ENCODE measurements at regions of chr11 and their contacts with region 1.

Region 1: GRCh38 chr11:24598641-24599040 is 101.8 kb downstream of the LUZP2 start:
- DNase-seq: no peak
- H3K4me3 ChIP-seq: no peak overlapping the region
- H3K27ac ChIP-seq: no peak overlapping the region
- H3K4me1 ChIP-seq: no peaks in the 10 kb centered on the region
- H3K27me3 ChIP-seq: no peaks in the 10 kb centered on the region
- CTCF ChIP-seq: no peak
- POLR2A ChIP-seq: no peak

Region 2: GRCh38 chr11:23564370-23564769 is 1034.3 kb before region 1 on chr11:
- intact Hi-C with region 1: no loop called
- DNase-seq: no peak
- H3K4me3 ChIP-seq: no peak overlapping the region
- H3K27ac ChIP-seq: no peak overlapping the region
- H3K4me1 ChIP-seq: no peaks in the 10 kb centered on the region
- H3K27me3 ChIP-seq: no peaks in the 10 kb centered on the region
- CTCF ChIP-seq: no peak
- POLR2A ChIP-seq: no peak

Region 3: GRCh38 chr11:24588075-24588474 is 10.6 kb before region 1 on chr11:
- intact Hi-C with region 1: loop called (anchors 2 kb)
- DNase-seq: no peak
- H3K4me3 ChIP-seq: no peak overlapping the region
- H3K27ac ChIP-seq: no peak overlapping the region
- H3K4me1 ChIP-seq: no peaks in the 10 kb centered on the region
- H3K27me3 ChIP-seq: no peaks in the 10 kb centered on the region
- CTCF ChIP-seq: no peak
- POLR2A ChIP-seq: no peak

Region 4: DNA sequence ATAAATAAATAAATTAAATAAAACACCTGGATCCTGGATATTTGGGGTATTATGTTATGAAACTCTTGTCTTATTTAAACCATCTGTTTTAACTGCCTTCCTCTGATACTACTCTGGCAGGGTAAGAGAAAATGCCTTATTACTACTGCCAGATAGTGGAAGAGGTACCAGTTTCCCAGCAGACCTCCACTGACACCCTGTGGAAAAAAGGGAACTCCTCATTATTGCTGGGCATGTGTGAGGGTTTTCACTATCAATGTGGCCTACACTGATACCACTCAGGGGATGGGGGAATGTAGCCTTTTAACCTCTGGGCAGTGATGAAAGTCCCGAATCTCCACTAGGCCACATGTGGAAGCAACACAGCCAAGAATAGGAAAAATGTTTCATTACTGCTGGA is 19.2 kb after region 1 on chr11:
- intact Hi-C with region 1: no loop called
- DNase-seq: no peak
- H3K4me3 ChIP-seq: no peak overlapping the region
- H3K27ac ChIP-seq: no peak overlapping the region
- H3K4me1 ChIP-seq: no peaks in the 10 kb centered on the region
- H3K27me3 ChIP-seq: no peaks in the 10 kb centered on the region
- CTCF ChIP-seq: no peak
- POLR2A ChIP-seq: no peak

Measured in breast epithelium (tissue), 4 donors.